Psoas muscle (tissue), 8 donors: ENCODE measurements at regions of chr1 and their contacts with region 1.

Region 1: DNA sequence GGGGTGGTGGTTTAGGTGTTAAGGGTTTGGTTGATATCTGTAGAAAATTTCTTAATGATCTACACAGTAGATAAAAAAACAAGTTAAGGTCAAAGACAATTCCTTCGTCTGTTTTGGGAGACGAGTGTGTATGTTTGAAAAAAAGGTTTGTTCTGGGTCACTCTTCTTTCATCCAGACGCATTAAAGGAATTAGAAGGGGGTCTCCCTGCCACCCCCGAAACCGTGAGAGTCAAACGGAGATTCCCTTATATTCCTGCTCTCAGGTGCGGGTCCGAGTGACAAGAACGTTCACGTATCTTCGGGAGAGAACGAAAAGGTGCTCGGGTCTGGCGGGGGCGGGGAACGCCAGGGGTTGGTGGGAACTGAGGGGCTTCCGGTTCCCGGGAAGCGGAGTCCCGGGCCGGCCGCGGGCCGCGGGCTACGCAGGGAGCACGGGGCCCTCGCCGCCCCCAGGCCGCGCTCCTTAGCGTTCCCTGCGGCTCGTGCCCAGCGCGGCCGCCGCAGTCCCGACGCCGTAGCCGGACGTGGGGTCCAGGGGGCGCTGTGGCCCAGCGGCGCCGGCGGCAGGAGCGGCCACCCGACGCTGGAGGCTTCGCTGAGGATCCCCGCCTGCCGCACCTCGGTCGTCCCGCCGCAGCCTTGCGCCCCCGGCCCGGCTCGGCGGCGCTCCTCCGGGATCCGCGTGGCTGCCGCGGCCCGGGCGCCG is at the start of gene ZFYVE9:
- DNase-seq: peak; percentile 80 to 90
- ATAC-seq: peak; percentile 87 to 93 (median 90)
- H3K4me3 ChIP-seq: peak within 1 kb of the TSS; percentile 95
- H3K27ac ChIP-seq: peak within 1 kb of the TSS; percentile 98
- H3K4me1 ChIP-seq: peaks cover 45% of the 10 kb centered on the region
- H3K27me3 ChIP-seq: no peaks in the 10 kb centered on the region
- CTCF ChIP-seq: peak; percentile 82
- total RNA-seq, gene ZFYVE9: 29.9 to 39.1 (median 32.0) TPM

Region 2: DNA sequence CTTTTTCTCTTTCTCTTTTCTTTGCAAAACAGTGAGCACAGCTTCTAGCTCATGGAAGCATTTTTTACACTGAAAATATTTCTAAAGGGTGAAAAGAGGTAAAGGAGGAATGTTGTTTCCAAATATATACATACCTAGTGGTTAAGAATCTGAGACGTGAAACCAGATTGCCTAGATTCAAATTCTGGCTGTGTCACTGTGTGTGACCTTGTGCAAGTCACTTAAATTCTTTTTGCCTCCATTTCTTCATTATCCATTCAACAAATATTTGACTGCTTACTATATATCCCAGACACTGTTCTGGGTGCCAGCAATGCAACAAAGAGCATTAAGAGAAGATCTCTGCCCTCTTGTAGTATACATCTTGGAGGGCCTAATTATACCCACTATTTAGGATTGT is 53.5 kb after region 1 on chr1:
- intact Hi-C with region 1: loop called (anchors 5 to 10 kb)
- DNase-seq: no peak
- ATAC-seq: no peak
- H3K4me3 ChIP-seq: no peak overlapping the region
- H3K27ac ChIP-seq: no peak overlapping the region
- H3K4me1 ChIP-seq: peaks cover 18% of the 10 kb centered on the region
- H3K27me3 ChIP-seq: peaks cover 0 to 4% (median 0%) of the 10 kb centered on the region in 3 donors
- CTCF ChIP-seq: no peak

Region 3: GRCh38 chr1:52203935-52204625 is 62.4 kb after region 1 on chr1:
- intact Hi-C with region 1: loop called (anchors 5 to 10 kb)
- DNase-seq: no peak
- ATAC-seq: peak; percentile 79 to 93 (median 88)
- H3K4me3 ChIP-seq: peak overlapping the region; percentile 36
- H3K27ac ChIP-seq: peak overlapping the region; percentile 76
- H3K4me1 ChIP-seq: peaks cover 15% of the 10 kb centered on the region
- H3K27me3 ChIP-seq: no peaks in the 10 kb centered on the region
- CTCF ChIP-seq: no peak

Region 4: DNA sequence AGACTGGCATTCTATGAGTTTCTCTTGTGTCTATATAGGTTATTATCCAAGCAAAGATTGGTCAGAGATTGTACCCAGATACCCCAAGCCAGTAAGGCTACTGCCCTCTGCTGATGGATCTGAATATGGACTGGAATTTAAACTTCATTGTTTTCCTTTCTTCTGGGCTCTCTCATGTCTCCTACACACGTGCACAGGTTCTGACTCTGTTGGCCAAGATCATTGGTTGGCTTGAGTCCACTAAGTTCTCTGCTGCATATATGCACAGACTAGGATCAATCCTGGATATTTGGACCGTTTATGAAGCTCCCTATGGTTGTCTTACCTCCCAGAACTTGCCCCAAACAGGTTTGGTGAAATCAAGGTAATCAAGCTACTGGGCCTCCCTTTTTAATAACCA is 154.7 kb after region 1 on chr1:
- intact Hi-C with region 1: loop called (anchors 1 to 5 kb)
- DNase-seq: no peak
- ATAC-seq: peak; percentile 56 to 89 (median 84)
- H3K4me3 ChIP-seq: no peak overlapping the region
- H3K27ac ChIP-seq: no peak overlapping the region
- H3K4me1 ChIP-seq: no peaks in the 10 kb centered on the region
- H3K27me3 ChIP-seq: no peaks in the 10 kb centered on the region
- CTCF ChIP-seq: peak; percentile 71